HepG2 (cell line): ENCODE measurements at regions of chr3 and their contacts with region 1.

Region 1: DNA sequence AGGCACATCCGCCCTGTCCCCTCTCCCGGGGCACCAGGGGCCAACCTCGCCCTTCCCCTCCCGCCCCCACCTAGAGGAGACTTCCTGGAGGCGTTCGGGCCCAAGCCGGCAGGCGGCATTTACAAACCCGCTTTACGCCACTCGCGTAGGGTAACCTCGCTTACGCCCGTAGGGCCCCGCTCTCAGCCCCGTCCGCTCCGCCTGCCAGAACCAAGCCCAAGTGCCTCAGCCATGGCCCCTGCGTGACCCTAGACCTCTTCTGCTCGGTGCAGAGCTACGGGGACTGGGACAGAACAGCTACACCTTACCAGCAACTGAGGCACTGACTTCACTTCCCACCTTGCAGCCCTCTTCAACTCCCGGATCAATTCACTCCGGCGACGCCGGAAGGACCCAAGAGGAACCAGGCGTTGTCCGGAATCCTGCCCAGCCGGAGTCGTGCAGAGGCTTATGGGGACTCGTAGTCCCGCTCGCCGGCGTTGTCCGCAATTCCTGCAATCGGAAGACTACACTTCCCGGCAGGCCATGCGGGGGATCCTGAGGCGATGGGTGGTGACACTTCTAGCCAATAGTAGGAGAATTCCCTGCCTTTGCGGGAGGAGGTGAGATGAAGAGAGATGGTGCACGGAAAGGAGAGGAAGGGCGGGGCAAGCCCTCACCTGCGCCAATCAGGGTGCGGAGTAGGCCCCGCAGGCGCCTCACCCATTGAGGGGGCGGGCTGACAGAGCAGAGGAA is at the start of gene PDCD10:
- DNase-seq: peak; percentile 99
- ATAC-seq: peak; percentile 92
- H3K4me3 ChIP-seq: peak within 1 kb of the TSS; percentile 95 to 98 (median 98)
- H3K27ac ChIP-seq: peak within 1 kb of the TSS; percentile 97
- H3K4me1 ChIP-seq: peaks cover 69% of the 10 kb centered on the region
- H3K27me3 ChIP-seq: peaks cover 0 to 4% of the 10 kb centered on the region in 2 experiments; a peak in 1 of 5 replicates
- CTCF ChIP-seq: 0 out of 2 replicates have a peak, but pooled peaks have one; percentile 12
- EP300 ChIP-seq: no peak
- POLR2A ChIP-seq: peak; percentile 80 to 91
- RAD21 ChIP-seq: no peak
- total RNA-seq, gene PDCD10: 53.9 and 84.4 TPM in 2 replicates

Region 2: GRCh38 chr3:167409611-167410010 is 325.1 kb before region 1 on chr3:
- CTCF ChIA-PET with region 1: no interaction called
- POLR2A ChIA-PET with region 1: no interaction called
- in situ Hi-C with region 1: no loop called
- intact Hi-C with region 1: no loop called
- DNase-seq: no peak
- ATAC-seq: no peak
- H3K4me3 ChIP-seq: no peak overlapping the region
- H3K27ac ChIP-seq: no peak overlapping the region
- H3K4me1 ChIP-seq: no peaks in the 10 kb centered on the region
- H3K27me3 ChIP-seq: no peaks in the 10 kb centered on the region
- CTCF ChIP-seq: no peak
- EP300 ChIP-seq: no peak
- POLR2A ChIP-seq: no peak
- RAD21 ChIP-seq: no peak

Region 3: GRCh38 chr3:167575000-167575600 is 159.6 kb before region 1 on chr3:
- CTCF ChIA-PET with region 1: no interaction called
- POLR2A ChIA-PET with region 1: no interaction called
- in situ Hi-C with region 1: no loop called
- intact Hi-C with region 1: no loop called
- DNase-seq: no peak
- ATAC-seq: no peak
- H3K4me3 ChIP-seq: no peak overlapping the region
- H3K27ac ChIP-seq: no peak overlapping the region
- H3K4me1 ChIP-seq: no peaks in the 10 kb centered on the region
- H3K27me3 ChIP-seq: no peaks in the 10 kb centered on the region
- CTCF ChIP-seq: no peak
- EP300 ChIP-seq: no peak
- POLR2A ChIP-seq: no peak
- RAD21 ChIP-seq: no peak

Region 4: GRCh38 chr3:167691366-167691765 is 43.3 kb before region 1 on chr3:
- CTCF ChIA-PET with region 1: no interaction called
- POLR2A ChIA-PET with region 1: no interaction called
- in situ Hi-C with region 1: no loop called
- intact Hi-C with region 1: loop called (anchors 5 kb)
- DNase-seq: no peak
- ATAC-seq: no peak
- H3K4me3 ChIP-seq: no peak overlapping the region
- H3K27ac ChIP-seq: no peak overlapping the region
- H3K4me1 ChIP-seq: no peaks in the 10 kb centered on the region
- H3K27me3 ChIP-seq: no peaks in the 10 kb centered on the region
- CTCF ChIP-seq: no peak
- EP300 ChIP-seq: no peak
- POLR2A ChIP-seq: no peak
- RAD21 ChIP-seq: no peak

Region 5: GRCh38 chr3:167882067-167882667 is 147.5 kb after region 1 on chr3:
- CTCF ChIA-PET with region 1: no interaction called
- POLR2A ChIA-PET with region 1: interaction called, 3 read pairs
- in situ Hi-C with region 1: no loop called
- intact Hi-C with region 1: loop called (anchors 2 kb)
- DNase-seq: peak; percentile 30
- ATAC-seq: 0 out of 3 replicates have a peak, but pooled peaks have one; percentile 31
- H3K4me3 ChIP-seq: no peak overlapping the region
- H3K27ac ChIP-seq: no peak overlapping the region
- H3K4me1 ChIP-seq: peaks cover 10% of the 10 kb centered on the region
- H3K27me3 ChIP-seq: no peaks in the 10 kb centered on the region; a peak in 1 of 5 replicates
- CTCF ChIP-seq: peak; percentile 50
- EP300 ChIP-seq: no peak
- POLR2A ChIP-seq: no peak
- RAD21 ChIP-seq: no peak